Caco-2 (cell line): ENCODE measurements at regions of chr2 and their contacts with region 1.

Region 1: DNA sequence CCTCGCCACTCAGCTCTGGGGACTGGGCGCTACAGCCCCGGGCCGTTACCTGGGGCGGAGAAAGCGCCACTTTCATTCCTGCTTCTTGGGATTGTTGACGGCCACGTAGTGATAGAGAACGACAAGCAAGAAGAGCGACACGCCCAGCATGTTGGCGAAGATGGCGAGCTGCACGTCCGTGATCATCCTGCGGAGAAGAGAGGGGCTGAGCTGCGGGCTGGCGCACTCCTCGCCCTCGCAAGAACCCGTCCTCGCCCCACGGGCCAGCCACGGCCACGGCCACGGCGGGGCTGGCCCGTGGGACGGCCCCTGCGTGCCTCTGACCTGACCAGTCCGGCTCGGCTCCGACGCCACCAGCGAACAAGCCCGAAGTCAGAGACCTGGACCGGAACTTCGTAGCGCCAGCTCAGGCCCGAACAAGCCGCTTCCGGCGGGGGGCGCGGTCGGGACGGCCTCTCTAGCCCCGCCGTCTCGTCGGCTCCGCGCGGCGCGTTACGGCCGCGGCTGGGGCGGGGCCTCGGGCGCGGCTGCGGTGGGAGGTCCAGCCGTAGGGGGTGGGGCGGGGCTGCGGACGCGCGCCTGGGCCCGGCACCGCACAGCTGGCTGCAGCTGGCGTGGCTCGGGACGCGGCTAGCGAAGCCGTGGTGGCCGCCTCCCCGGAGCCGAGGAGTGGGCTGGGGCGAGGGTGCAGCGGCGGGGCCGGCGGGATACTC is at the start of gene OST4:
- DNase-seq: peak; percentile 91 to 97
- H3K4me3 ChIP-seq: peak within 1 kb of the TSS; percentile 90
- H3K4me3 Mint-ChIP-seq: peak within 1 kb of the TSS; percentile 95
- H3K27ac Mint-ChIP-seq: peak within 1 kb of the TSS; percentile 92
- H3K4me1 ChIP-seq: no peaks in the 10 kb centered on the region
- H3K4me1 Mint-ChIP-seq: peaks cover 9% of the 10 kb centered on the region
- H3K27me3 ChIP-seq: no peaks in the 10 kb centered on the region
- H3K27me3 Mint-ChIP-seq: peaks cover 10% of the 10 kb centered on the region
- CTCF ChIP-seq: no peak
- total RNA-seq, gene OST4: 237 and 249 TPM in 2 replicates

Region 2: GRCh38 chr2:27032495-27033252 is 38.8 kb before region 1 on chr2 and contains the start of gene TMEM214:
- CTCF ChIA-PET with region 1: no interaction called
- POLR2A ChIA-PET with region 1: interaction called, 19 read pairs
- intact Hi-C with region 1: no loop called
- DNase-seq: peak; percentile 90 to 93
- H3K4me3 ChIP-seq: peak within 1 kb of the TSS; percentile 92
- H3K4me3 Mint-ChIP-seq: peak within 1 kb of the TSS; percentile 98
- H3K27ac Mint-ChIP-seq: peak within 1 kb of the TSS; percentile 91
- H3K4me1 ChIP-seq: peaks cover 17% of the 10 kb centered on the region
- H3K4me1 Mint-ChIP-seq: peaks cover 7% of the 10 kb centered on the region
- H3K27me3 ChIP-seq: no peaks in the 10 kb centered on the region
- H3K27me3 Mint-ChIP-seq: no peaks in the 10 kb centered on the region
- CTCF ChIP-seq: peak in 1 of 2 experiments; percentile 29
- total RNA-seq, gene TMEM214: 85.0 and 85.4 TPM in 2 replicates

Region 3: GRCh38 chr2:27086090-27086723 is 14.8 kb after region 1 on chr2:
- CTCF ChIA-PET with region 1: interaction called, 19 read pairs
- POLR2A ChIA-PET with region 1: interaction called, 7 read pairs
- intact Hi-C with region 1: loop called (anchors 1 kb)
- DNase-seq: peak; percentile 94 to 99
- H3K4me3 ChIP-seq: peak overlapping the region; percentile 86
- H3K4me3 Mint-ChIP-seq: peak overlapping the region; percentile 89
- H3K27ac Mint-ChIP-seq: peak overlapping the region; percentile 66
- H3K4me1 ChIP-seq: peaks cover 7% of the 10 kb centered on the region
- H3K4me1 Mint-ChIP-seq: peaks cover 14% of the 10 kb centered on the region
- H3K27me3 ChIP-seq: no peaks in the 10 kb centered on the region
- H3K27me3 Mint-ChIP-seq: no peaks in the 10 kb centered on the region
- CTCF ChIP-seq: peak; percentile 74 to 88

Region 4: GRCh38 chr2:27241761-27242613 is 170.6 kb after region 1 on chr2:
- CTCF ChIA-PET with region 1: no interaction called
- POLR2A ChIA-PET with region 1: no interaction called
- intact Hi-C with region 1: no loop called
- DNase-seq: no peak
- H3K4me3 ChIP-seq: no peak overlapping the region
- H3K4me3 Mint-ChIP-seq: no peak overlapping the region
- H3K27ac Mint-ChIP-seq: no peak overlapping the region
- H3K4me1 ChIP-seq: no peaks in the 10 kb centered on the region
- H3K4me1 Mint-ChIP-seq: no peaks in the 10 kb centered on the region
- H3K27me3 ChIP-seq: no peaks in the 10 kb centered on the region
- H3K27me3 Mint-ChIP-seq: no peaks in the 10 kb centered on the region
- CTCF ChIP-seq: no peak

Region 5: DNA sequence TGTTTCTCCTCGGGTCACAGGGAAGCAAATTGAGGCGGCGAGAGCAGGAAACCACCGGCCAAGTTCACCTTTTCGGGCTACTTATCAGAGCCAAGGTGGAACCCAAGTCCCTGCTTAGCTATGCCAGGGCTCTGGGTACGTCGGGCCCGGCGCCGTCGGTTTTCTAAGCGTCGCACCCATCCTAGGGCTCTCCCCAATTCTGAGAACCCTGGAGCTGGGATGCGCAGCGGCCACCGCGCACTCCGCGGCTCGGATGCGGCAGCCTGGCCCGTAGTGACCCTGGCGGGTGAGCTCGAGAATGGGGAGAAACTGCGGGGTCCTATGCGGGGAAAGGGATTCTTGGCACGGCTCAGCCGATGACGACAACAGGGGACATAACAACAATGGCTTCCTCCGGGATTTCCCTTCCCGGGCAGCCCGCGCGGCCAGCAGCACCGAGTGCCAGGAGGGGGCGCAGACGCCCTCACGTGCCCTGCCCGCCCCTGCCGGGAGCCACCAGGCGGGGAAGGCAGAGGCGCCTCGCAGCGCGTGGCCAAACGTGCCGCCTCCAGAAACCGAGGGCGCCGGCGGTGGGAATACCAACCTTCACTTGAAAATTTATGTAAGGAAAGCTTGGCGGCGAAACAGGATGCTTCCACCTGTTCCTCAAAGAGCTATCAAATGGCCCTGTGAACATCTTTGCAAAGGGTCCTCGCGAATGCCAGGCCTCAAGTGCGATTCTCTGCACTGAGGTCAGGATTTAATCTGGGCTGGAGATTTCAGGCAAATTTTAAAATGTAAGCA is 193.5 kb after region 1 on chr2:
- CTCF ChIA-PET with region 1: no interaction called
- POLR2A ChIA-PET with region 1: no interaction called
- intact Hi-C with region 1: no loop called
- DNase-seq: peak; percentile 80 to 92
- H3K4me3 ChIP-seq: peak overlapping the region; percentile 50
- H3K4me3 Mint-ChIP-seq: peak overlapping the region; percentile 74
- H3K27ac Mint-ChIP-seq: no peak overlapping the region
- H3K4me1 ChIP-seq: peaks cover 18% of the 10 kb centered on the region
- H3K4me1 Mint-ChIP-seq: peaks cover 13% of the 10 kb centered on the region
- H3K27me3 ChIP-seq: peaks cover 6% of the 10 kb centered on the region; the same call in 1 of the 2 replicates
- H3K27me3 Mint-ChIP-seq: peaks cover 27% of the 10 kb centered on the region
- CTCF ChIP-seq: peak; percentile 78 to 88